ENCODE measurements at regions of chr10 and their contacts with region 1.

Region 1: DNA sequence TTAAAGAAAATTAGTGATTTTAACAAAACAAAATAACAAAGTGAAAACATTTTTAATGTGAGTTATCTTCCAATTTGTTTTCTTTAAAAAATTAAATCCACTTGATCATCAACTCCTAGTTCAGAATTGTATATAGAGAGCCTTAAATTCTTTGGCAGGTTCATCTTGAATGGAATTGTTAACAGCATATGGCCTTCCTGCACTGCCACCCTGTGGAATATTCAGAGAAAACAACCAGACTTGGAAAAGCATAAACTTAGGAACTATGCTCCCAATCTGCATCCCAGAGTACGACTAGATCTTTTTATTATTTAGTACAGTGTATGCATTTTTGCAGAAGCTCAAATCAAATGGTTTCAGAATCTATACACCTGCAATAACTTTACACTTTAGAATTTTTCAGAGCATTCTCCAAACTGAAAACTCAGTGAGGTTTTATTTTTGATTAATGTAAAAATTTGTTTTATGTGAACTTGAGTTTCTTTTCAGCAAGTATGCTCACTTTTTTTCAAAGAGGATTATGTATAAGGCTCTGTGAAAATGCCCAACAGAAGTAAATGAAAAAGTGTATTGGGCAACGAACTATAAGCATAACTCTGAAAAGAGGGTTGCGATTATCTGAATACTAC is 44.9 kb upstream of the ANK3 start:
- DNase-seq: peak; percentile 32
- H3K4me3 ChIP-seq: no peak overlapping the region
- H3K27ac ChIP-seq: no peak overlapping the region
- H3K4me1 ChIP-seq: peaks cover 16% of the 10 kb centered on the region
- H3K27me3 ChIP-seq: no peaks in the 10 kb centered on the region
- CTCF ChIP-seq: peak; percentile 54 to 68

Region 2: GRCh38 chr10:60114765-60115586 is 319.6 kb before region 1 on chr10:
- CTCF ChIA-PET with region 1: no interaction called
- dilution Hi-C with region 1: loop called (anchors 25 kb)
- in situ Hi-C with region 1: loop called in 1 of 2 experiments (anchors 10 kb)
- intact Hi-C with region 1: no loop called
- DNase-seq: peak; percentile 55
- H3K4me3 ChIP-seq: no peak overlapping the region
- H3K27ac ChIP-seq: no peak overlapping the region
- H3K4me1 ChIP-seq: no peaks in the 10 kb centered on the region
- H3K27me3 ChIP-seq: no peaks in the 10 kb centered on the region
- CTCF ChIP-seq: peak; percentile 61 to 70

Region 3: GRCh38 chr10:60208676-60209269 is 225.8 kb before region 1 on chr10:
- CTCF ChIA-PET with region 1: interaction called, 3 read pairs
- dilution Hi-C with region 1: no loop called
- in situ Hi-C with region 1: loop called in 1 of 2 experiments (anchors 10 kb)
- intact Hi-C with region 1: loop called (anchors 1 kb)
- DNase-seq: peak; percentile 21
- H3K4me3 ChIP-seq: no peak overlapping the region
- H3K27ac ChIP-seq: no peak overlapping the region
- H3K4me1 ChIP-seq: peaks cover 3% of the 10 kb centered on the region
- H3K27me3 ChIP-seq: no peaks in the 10 kb centered on the region
- CTCF ChIP-seq: peak; percentile 79 to 81

Region 4: GRCh38 chr10:60246382-60246781 is 188.2 kb before region 1 on chr10:
- CTCF ChIA-PET with region 1: no interaction called
- dilution Hi-C with region 1: no loop called
- in situ Hi-C with region 1: loop called in 1 of 2 experiments (anchors 10 kb)
- intact Hi-C with region 1: no loop called
- DNase-seq: no peak
- H3K4me3 ChIP-seq: no peak overlapping the region
- H3K27ac ChIP-seq: no peak overlapping the region
- H3K4me1 ChIP-seq: no peaks in the 10 kb centered on the region
- H3K27me3 ChIP-seq: no peaks in the 10 kb centered on the region
- CTCF ChIP-seq: no peak

Region 5: GRCh38 chr10:60757420-60757895 is 322.9 kb after region 1 on chr10:
- CTCF ChIA-PET with region 1: no interaction called
- dilution Hi-C with region 1: no loop called
- in situ Hi-C with region 1: loop called in 1 of 2 experiments (anchors 25 kb)
- intact Hi-C with region 1: no loop called
- DNase-seq: no peak
- H3K4me3 ChIP-seq: no peak overlapping the region
- H3K27ac ChIP-seq: no peak overlapping the region
- H3K4me1 ChIP-seq: peaks cover 13% of the 10 kb centered on the region
- H3K27me3 ChIP-seq: no peaks in the 10 kb centered on the region
- CTCF ChIP-seq: no peak

Measured in mammary epithelial cell (primary cell).